CD4-positive, alpha-beta memory T cell (primary cell): ENCODE measurements at regions of chr22 and their contacts with region 1.

Region 1: GRCh38 chr22:41946629-41947423 is at the start of gene CENPM:
- DNase-seq: peak; percentile 84 to 88 (median 86)
- H3K4me3 ChIP-seq: peak within 1 kb of the TSS; percentile 84 to 87
- H3K4me3 Mint-ChIP-seq: peak within 1 kb of the TSS; percentile 89 to 97 (median 92)
- H3K27ac ChIP-seq: peak within 1 kb of the TSS; percentile 53
- H3K27ac Mint-ChIP-seq: peak within 1 kb of the TSS; percentile 82 to 94 (median 89)
- H3K4me1 ChIP-seq: peaks cover 14% of the 10 kb centered on the region
- H3K4me1 Mint-ChIP-seq: peaks cover 4 to 29% (median 12%) of the 10 kb centered on the region in 4 donors
- H3K27me3 ChIP-seq: no peaks in the 10 kb centered on the region
- H3K27me3 Mint-ChIP-seq: no peaks in the 10 kb centered on the region
- total RNA-seq, gene CENPM: 7.6 to 12.0 TPM

Region 2: DNA sequence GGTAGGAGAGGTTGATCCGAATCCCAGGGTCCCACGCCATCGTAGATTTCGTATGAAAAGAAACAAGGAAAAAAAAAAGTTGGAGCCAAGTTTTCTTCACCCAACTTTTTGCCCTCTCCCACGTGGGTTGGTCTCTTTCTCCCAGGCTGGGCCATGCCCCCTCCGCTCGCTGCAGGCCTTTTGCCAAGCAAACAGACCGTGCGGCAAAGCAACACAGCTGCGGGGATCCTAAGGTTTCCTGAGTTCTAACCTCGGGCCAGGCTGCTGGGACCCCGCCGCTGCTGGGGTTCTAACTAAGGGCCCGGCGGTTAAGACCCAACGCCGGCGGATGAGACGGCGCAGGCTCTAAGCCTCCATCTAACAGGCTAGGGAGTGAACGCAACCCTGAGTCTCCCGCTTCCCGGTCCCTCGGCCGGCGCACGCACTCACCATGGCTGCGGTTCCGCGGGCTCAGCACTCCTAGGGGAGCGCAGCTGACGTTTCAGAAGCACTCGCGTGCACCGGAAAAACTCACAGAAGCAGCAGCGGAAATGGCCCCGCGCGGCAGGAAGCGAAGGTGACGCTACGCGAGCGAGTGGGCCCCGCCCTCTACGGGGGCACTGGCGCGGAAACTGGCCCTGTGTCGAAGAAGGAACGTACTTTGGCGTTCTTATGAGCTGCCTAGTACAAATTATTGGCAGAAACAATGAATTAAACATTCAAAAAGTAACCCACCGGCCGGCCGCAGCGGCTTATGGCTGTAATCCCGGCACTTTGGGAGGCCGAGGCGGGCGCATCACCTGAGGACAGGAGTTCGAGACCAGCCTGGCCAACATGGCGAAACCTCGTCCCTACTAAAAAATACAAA is 258.2 kb before region 1 on chr22 and contains the start of gene SNU13:
- CTCF ChIA-PET with region 1: interaction called, 8 read pairs
- POLR2A ChIA-PET with region 1: interaction called, 11 read pairs
- intact Hi-C with region 1: no loop called
- DNase-seq: peak; percentile 91 to 95 (median 92)
- H3K4me3 ChIP-seq: peak within 1 kb of the TSS; percentile 75 to 96
- H3K4me3 Mint-ChIP-seq: peak within 1 kb of the TSS; percentile 94 to 99 (median 97)
- H3K27ac ChIP-seq: peak within 1 kb of the TSS; percentile 95
- H3K27ac Mint-ChIP-seq: peak within 1 kb of the TSS; percentile 95 to 99 (median 98)
- H3K4me1 ChIP-seq: peaks cover 37% of the 10 kb centered on the region
- H3K4me1 Mint-ChIP-seq: peaks cover 21 to 48% (median 33%) of the 10 kb centered on the region in 4 donors
- H3K27me3 ChIP-seq: no peaks in the 10 kb centered on the region
- H3K27me3 Mint-ChIP-seq: no peaks in the 10 kb centered on the region
- total RNA-seq, gene SNU13: 123 to 129 TPM

Region 3: GRCh38 chr22:41746567-41747400 is 200.0 kb before region 1 on chr22:
- CTCF ChIA-PET with region 1: interaction called, 91 read pairs
- POLR2A ChIA-PET with region 1: interaction called, 31 read pairs
- intact Hi-C with region 1: no loop called
- DNase-seq: peak; percentile 48 to 66 (median 51)
- H3K4me3 ChIP-seq: no peak overlapping the region
- H3K4me3 Mint-ChIP-seq: no peak overlapping the region
- H3K27ac ChIP-seq: no peak overlapping the region
- H3K27ac Mint-ChIP-seq: peak overlapping the region in 1 of 7 donors; percentile 2
- H3K4me1 ChIP-seq: no peaks in the 10 kb centered on the region
- H3K4me1 Mint-ChIP-seq: peaks cover 0 to 5% (median 1%) of the 10 kb centered on the region in 4 donors
- H3K27me3 ChIP-seq: no peaks in the 10 kb centered on the region
- H3K27me3 Mint-ChIP-seq: peaks cover 0 to 2% of the 10 kb centered on the region in 2 donors

Region 4: DNA sequence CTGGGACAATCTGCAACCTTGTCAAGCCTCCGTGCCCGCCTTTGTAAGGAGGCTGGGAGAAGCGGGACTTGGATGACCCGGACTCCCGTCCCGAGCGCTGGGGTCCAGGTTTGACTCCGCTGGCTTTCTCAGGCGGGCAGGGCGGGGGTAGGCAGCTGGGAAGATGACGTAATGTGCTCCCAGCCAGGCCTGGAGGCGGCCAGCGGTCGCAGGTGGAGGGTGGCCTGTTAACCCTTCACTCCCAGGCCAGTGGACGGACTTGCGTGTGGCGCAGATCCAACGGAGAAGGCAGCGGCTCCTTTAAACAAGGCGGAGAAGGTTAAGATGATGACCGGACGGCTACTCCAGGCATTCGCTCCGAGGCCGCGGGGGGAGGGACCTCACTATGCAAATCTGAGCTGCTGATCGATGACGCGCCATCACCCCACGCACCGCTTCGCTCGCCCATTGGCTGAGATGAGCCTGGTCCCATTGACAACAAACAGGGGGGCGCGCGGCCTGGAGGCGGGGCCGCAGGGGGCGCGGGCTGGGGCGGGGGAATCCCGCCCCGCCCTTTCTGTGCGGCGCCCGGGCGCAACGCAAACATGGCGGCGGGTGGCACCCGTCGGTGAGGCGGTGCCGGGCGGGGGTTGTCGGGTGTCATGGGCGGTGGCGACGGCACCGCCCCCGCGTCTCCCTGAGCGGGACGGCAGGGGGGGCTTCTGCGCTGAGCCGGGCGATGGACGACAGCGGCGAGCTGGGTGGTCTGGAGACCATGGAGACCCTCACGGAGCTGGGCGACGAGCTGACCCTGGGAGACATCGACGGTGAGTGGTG is 114.1 kb before region 1 on chr22 and contains the start of gene SREBF2:
- CTCF ChIA-PET with region 1: interaction called, 30 read pairs
- POLR2A ChIA-PET with region 1: interaction called, 139 read pairs
- intact Hi-C with region 1: no loop called
- DNase-seq: peak; percentile 97 to 99 (median 98)
- H3K4me3 ChIP-seq: peak within 1 kb of the TSS; percentile 36 to 93
- H3K4me3 Mint-ChIP-seq: peak within 1 kb of the TSS; percentile 92 to 97 (median 95)
- H3K27ac ChIP-seq: peak within 1 kb of the TSS; percentile 84
- H3K27ac Mint-ChIP-seq: peak within 1 kb of the TSS; percentile 98 to 100 (median 99)
- H3K4me1 ChIP-seq: peaks cover 26% of the 10 kb centered on the region
- H3K4me1 Mint-ChIP-seq: peaks cover 21 to 46% (median 31%) of the 10 kb centered on the region in 4 donors
- H3K27me3 ChIP-seq: no peaks in the 10 kb centered on the region
- H3K27me3 Mint-ChIP-seq: no peaks in the 10 kb centered on the region
- total RNA-seq, gene SREBF2: 109 to 112 TPM

Region 5: DNA sequence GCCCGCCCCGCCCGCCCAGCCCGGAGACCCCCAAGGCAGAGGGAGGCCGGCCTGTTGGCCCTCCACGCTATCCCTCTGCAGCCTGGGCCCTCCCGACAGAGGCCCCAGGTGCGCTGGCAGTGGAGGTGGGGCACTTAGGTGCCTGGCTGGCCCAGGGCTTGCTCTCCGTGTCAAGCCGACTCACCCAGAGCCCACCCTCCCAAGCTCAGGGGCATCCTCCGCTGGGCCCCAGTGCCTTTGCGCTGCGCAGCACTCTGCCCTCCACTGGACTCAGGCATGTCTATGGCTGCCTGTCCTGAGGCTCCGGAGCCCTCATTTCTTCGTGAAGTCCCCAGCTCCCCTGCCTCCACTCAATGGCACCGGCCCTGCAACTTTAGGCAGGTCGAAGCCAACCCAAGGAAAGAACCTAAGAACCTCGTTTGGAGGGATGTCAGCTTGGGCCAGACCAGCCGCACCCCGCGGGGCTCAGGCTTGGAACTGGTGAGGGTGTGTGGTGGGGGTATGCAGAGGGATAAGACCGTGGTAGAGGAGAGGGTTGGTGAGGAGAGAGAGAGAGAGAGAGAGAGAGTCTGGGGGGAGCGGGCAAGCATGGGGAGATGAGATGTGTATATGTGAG is 11.2 kb after region 1 on chr22:
- CTCF ChIA-PET with region 1: interaction called, 8 read pairs
- POLR2A ChIA-PET with region 1: no interaction called
- intact Hi-C with region 1: loop called (anchors 1 kb)
- DNase-seq: no peak
- H3K4me3 ChIP-seq: no peak overlapping the region
- H3K4me3 Mint-ChIP-seq: no peak overlapping the region
- H3K27ac ChIP-seq: no peak overlapping the region
- H3K27ac Mint-ChIP-seq: peak overlapping the region in 1 of 7 donors; percentile 69
- H3K4me1 ChIP-seq: no peaks in the 10 kb centered on the region
- H3K4me1 Mint-ChIP-seq: peaks cover 3 to 5% (median 4%) of the 10 kb centered on the region in 4 donors
- H3K27me3 ChIP-seq: no peaks in the 10 kb centered on the region
- H3K27me3 Mint-ChIP-seq: peaks cover 0 to 1% of the 10 kb centered on the region in 2 donors

Region 6: DNA sequence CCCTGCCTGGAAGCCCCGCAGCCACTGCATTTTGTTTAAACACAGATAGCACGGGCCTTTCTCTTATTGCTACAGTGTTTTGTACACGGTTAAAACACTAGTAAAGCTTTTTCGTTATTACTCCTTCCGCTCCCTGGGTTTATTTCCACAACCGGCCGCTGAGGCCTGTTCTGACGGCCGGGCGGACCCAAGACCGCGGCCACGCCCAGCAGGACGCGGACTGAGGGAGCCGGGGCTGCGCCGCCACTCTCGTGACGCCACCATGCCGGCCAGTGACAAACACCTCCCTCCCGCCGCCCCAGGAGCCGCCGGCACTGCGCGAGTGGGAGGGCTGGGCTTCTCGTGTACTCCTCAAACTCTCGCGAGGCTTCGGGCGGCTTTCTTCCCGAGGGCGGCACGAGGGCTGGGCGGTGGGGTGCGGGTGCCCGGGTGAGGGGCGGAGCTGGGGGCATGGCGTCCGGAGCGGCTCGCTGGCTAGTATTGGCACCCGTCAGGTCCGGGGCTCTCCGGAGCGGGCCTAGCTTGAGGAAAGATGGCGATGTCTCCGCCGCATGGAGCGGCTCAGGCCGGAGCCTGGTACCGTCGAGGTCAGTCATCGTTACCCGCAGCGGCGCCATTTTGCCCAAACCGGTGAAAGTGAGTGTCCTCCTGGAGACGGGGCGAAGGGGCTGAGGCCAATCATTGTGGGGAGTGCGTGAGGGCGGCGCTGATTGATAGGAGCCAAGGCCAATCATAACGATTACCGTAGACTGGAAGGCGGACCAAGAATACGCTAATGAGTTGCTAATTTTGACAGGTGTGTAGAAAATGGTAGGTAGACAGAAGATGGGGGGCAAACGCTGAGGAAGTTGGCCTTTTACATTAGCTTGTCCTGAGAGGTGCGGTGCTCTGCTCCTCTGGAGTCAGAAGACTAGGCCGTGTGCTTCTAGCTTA is 132.8 kb after region 1 on chr22 and contains the start of gene SMDT1:
- CTCF ChIA-PET with region 1: interaction called, 6 read pairs
- POLR2A ChIA-PET with region 1: interaction called, 11 read pairs
- intact Hi-C with region 1: no loop called
- DNase-seq: peak; percentile 98 to 99 (median 99)
- H3K4me3 ChIP-seq: peak within 1 kb of the TSS; percentile 70 to 78
- H3K4me3 Mint-ChIP-seq: peak within 1 kb of the TSS; percentile 88 to 98 (median 96)
- H3K27ac ChIP-seq: peak within 1 kb of the TSS; percentile 97
- H3K27ac Mint-ChIP-seq: peak within 1 kb of the TSS; percentile 93 to 100 (median 99)
- H3K4me1 ChIP-seq: peaks cover 38% of the 10 kb centered on the region
- H3K4me1 Mint-ChIP-seq: peaks cover 19 to 58% (median 38%) of the 10 kb centered on the region in 4 donors
- H3K27me3 ChIP-seq: no peaks in the 10 kb centered on the region
- H3K27me3 Mint-ChIP-seq: no peaks in the 10 kb centered on the region
- total RNA-seq, gene SMDT1: 101 to 105 TPM